ENCODE measurements at regions of chr13 and their contacts with region 1.

Region 1: GRCh38 chr13:96898646-96899254 is 95.5 kb downstream of the OXGR1 start:
- DNase-seq: no peak
- ATAC-seq: no peak
- H3K4me3 ChIP-seq: peak overlapping the region in 1 of 4 donors; percentile 10
- H3K27ac ChIP-seq: no peak overlapping the region
- H3K4me1 ChIP-seq: no peaks in the 10 kb centered on the region
- H3K27me3 ChIP-seq: no peaks in the 10 kb centered on the region
- CTCF ChIP-seq: no peak
- POLR2A ChIP-seq: no peak

Region 2: GRCh38 chr13:96730676-96731075 is 168.1 kb before region 1 on chr13:
- in situ Hi-C with region 1: no loop called
- intact Hi-C with region 1: no loop called
- DNase-seq: no peak
- ATAC-seq: no peak
- H3K4me3 ChIP-seq: no peak overlapping the region
- H3K27ac ChIP-seq: no peak overlapping the region
- H3K4me1 ChIP-seq: no peaks in the 10 kb centered on the region
- H3K27me3 ChIP-seq: no peaks in the 10 kb centered on the region
- CTCF ChIP-seq: no peak
- POLR2A ChIP-seq: no peak

Region 3: GRCh38 chr13:96958286-96958891 is 59.6 kb after region 1 on chr13:
- in situ Hi-C with region 1: loop called in 1 of 4 experiments (anchors 10 kb)
- intact Hi-C with region 1: no loop called
- DNase-seq: no peak
- ATAC-seq: no peak
- H3K4me3 ChIP-seq: no peak overlapping the region
- H3K27ac ChIP-seq: no peak overlapping the region
- H3K4me1 ChIP-seq: no peaks in the 10 kb centered on the region
- H3K27me3 ChIP-seq: no peaks in the 10 kb centered on the region
- CTCF ChIP-seq: peak in 3 of 5 experiments; percentile 46 to 65 (median 58)
- POLR2A ChIP-seq: no peak

Measured in gastrocnemius medialis (tissue), 4 donors.